A673 (cell line): ENCODE measurements at regions of chr10 and their contacts with region 1.

Region 1: DNA sequence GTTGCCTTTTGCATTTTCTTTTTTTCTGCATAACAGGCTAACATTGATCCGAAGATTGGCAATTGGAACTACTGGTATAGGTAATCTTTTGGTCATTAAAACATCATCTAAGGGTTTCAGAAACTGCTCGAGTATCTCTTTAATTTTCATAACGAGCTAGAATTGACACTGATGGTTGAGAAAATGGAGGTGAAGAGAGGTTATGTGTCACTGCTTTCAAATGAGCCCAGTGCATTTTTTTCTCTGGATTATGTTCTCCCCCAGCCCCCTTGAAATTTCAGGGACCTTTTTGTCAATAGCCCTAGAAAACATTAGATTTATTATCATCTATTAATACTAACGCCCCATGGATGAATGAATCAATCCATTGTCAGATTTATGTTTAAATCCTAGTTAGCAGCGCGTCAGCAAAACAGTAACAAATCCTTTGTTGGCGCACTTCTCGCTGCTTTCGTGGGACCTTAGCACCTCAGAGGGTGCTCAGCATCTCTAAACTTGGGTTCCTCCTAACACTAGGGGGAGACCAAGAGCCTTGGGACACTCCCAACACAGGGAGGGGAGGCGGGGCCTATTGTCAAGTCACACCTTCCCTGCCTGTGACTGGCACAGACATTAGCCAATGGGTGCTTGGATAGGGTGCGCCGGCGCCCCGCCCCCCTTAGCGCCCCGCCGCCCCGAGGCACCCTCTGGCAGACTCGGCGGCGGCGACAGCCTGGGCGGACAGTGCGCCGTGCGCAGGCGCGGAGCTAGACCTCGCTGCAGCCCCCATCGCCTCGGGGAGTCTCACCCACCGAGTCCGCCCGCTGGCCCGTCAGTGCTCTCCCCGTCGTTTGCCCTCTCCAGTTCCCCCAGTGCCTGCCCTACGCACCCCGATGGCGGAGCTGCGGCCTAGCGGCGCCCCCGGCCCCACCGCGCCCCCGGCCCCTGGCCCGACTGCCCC is at the start of gene SUFU:
- DNase-seq: peak; percentile 99
- H3K4me3 ChIP-seq: peak within 1 kb of the TSS; percentile 89
- H3K27ac ChIP-seq: peak within 1 kb of the TSS; percentile 87
- H3K4me1 ChIP-seq: peaks cover 12% of the 10 kb centered on the region
- H3K27me3 ChIP-seq: no peaks in the 10 kb centered on the region
- CTCF ChIP-seq: peak; percentile 89
- total RNA-seq, gene SUFU: 20.5 and 23.3 TPM in 2 replicates

Region 2: GRCh38 chr10:102151774-102152544 is 351.6 kb before region 1 on chr10 and contains the start of gene NOLC1:
- CTCF ChIA-PET with region 1: no interaction called
- POLR2A ChIA-PET with region 1: no interaction called
- intact Hi-C with region 1: loop called (anchors 5 kb)
- DNase-seq: peak; percentile 99
- H3K4me3 ChIP-seq: peak within 1 kb of the TSS; percentile 73
- H3K27ac ChIP-seq: peak within 1 kb of the TSS; percentile 93
- H3K4me1 ChIP-seq: peaks cover 7% of the 10 kb centered on the region
- H3K27me3 ChIP-seq: no peaks in the 10 kb centered on the region
- CTCF ChIP-seq: no peak
- total RNA-seq, gene NOLC1: 194 and 225 TPM in 2 replicates

Region 3: GRCh38 chr10:102583435-102584417 is 80.2 kb after region 1 on chr10:
- CTCF ChIA-PET with region 1: interaction called, 29 read pairs
- POLR2A ChIA-PET with region 1: no interaction called
- intact Hi-C with region 1: loop called (anchors 1 kb)
- DNase-seq: peak; percentile 90
- H3K4me3 ChIP-seq: no peak overlapping the region
- H3K27ac ChIP-seq: no peak overlapping the region
- H3K4me1 ChIP-seq: peaks cover 18% of the 10 kb centered on the region
- H3K27me3 ChIP-seq: no peaks in the 10 kb centered on the region
- CTCF ChIP-seq: peak; percentile 87

Region 4: DNA sequence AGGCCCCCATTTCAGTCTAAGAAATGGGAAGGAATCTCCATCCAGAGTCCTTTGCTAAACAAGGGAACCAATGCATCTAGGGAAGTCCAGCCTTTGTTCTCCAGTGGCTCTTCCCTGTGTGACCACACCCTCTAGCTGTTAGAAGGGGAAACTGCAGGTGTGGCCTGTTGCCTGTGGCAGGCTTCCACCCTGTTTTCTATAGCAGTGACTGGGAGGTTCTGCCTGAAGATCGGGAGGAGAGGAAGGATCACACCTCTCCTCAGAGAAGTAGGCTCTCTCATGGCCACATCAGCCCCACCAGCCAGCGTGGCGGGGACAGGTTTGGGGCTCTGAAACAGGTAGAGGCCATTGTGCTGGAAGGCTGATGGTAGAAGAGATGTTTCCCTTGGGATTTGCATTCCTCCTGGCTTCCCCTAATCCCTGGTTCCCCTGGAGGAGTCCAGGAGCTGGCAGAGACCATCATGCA is 93.0 kb after region 1 on chr10:
- CTCF ChIA-PET with region 1: no interaction called
- POLR2A ChIA-PET with region 1: no interaction called
- intact Hi-C with region 1: loop called (anchors 5 kb)
- DNase-seq: peak; percentile 72
- H3K4me3 ChIP-seq: no peak overlapping the region
- H3K27ac ChIP-seq: no peak overlapping the region
- H3K4me1 ChIP-seq: no peaks in the 10 kb centered on the region
- H3K27me3 ChIP-seq: no peaks in the 10 kb centered on the region
- CTCF ChIP-seq: peak; percentile 80

Region 5: DNA sequence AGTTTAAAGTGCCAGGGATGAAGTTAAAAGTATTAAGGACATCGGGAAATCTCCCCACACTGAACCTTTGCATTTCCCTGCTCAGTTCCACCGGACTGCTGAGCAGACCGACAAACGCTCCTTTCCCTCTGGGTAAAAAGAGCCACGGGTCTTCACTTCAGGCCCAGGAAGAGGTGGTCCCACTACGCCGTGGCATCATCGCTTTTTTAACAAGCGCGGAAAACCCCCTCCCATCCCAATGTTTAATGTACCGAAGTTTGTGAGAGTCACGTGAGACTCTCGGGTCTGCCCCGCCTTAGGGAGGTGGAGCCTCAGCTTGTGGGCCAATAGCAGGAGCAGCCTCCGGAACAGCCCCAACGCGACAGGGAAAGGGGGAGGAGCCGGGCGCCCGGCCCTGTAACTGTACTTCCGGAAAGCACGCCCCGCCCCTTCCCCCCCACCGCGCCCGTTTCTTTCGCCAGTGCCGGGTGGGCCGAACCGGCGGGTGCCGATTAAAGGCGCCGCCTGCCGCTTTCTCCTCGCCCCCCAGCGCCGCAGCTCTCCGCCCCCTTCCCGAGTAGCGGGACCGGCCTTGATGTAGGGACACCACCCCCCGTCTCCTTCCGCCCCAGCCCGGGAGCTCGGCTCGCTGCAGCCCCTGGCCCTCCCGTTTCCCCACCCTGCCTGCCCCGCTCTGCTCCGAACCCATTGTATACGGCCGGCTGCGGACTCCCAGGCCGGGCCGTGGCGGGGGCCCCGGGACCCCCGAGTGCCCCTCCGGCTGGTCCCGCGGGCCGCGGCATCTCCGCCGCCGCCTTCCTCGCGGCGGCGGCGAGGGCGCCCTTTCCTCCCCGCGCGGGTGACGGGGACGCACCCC is 138.6 kb after region 1 on chr10:
- CTCF ChIA-PET with region 1: interaction called, 3 read pairs
- POLR2A ChIA-PET with region 1: no interaction called
- intact Hi-C with region 1: loop called (anchors 1 kb)
- DNase-seq: peak; percentile 98
- H3K4me3 ChIP-seq: peak overlapping the region; percentile 96
- H3K27ac ChIP-seq: peak overlapping the region; percentile 88
- H3K4me1 ChIP-seq: peaks cover 9% of the 10 kb centered on the region
- H3K27me3 ChIP-seq: no peaks in the 10 kb centered on the region
- CTCF ChIP-seq: no peak

Region 6: GRCh38 chr10:102713814-102714620 is 210.5 kb after region 1 on chr10 and contains the start of gene ARL3:
- CTCF ChIA-PET with region 1: no interaction called
- POLR2A ChIA-PET with region 1: interaction called, 4 read pairs
- intact Hi-C with region 1: loop called (anchors 2 kb)
- DNase-seq: peak; percentile 100
- H3K4me3 ChIP-seq: peak within 1 kb of the TSS; percentile 74
- H3K27ac ChIP-seq: peak within 1 kb of the TSS; percentile 85
- H3K4me1 ChIP-seq: peaks cover 34% of the 10 kb centered on the region
- H3K27me3 ChIP-seq: no peaks in the 10 kb centered on the region
- CTCF ChIP-seq: peak; percentile 35
- total RNA-seq, gene ARL3: 14.9 and 17.2 TPM in 2 replicates

Region 7: DNA sequence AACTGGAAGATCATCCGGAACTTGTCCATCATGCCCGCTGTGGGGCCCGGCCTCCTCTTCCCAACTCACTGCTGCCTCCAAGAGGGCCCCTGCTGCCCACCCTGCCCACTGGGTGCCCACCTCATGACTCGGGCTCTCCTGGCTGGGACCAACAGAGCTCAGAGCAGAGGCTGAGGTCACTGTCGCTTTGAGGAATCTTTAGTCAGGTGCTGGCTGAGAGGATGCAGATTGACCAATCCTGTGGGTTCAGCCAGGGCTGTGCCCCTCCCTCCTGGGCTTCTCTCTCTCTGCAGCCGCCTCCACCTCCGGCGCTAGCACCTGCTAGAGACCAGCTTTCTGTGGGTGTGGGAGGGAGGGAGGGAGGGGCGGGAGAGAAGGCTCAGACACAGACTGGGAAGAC is 955.2 kb after region 1 on chr10 and contains the start of gene CALHM1:
- CTCF ChIA-PET with region 1: no interaction called
- POLR2A ChIA-PET with region 1: no interaction called
- intact Hi-C with region 1: no loop called
- DNase-seq: no peak
- H3K4me3 ChIP-seq: no peak within 1 kb of the TSS
- H3K27ac ChIP-seq: no peak within 1 kb of the TSS
- H3K4me1 ChIP-seq: no peaks in the 10 kb centered on the region
- H3K27me3 ChIP-seq: no peaks in the 10 kb centered on the region
- CTCF ChIP-seq: no peak
- total RNA-seq, gene CALHM1: not detected in 2 replicates